Psoas muscle (tissue), 8 donors: ENCODE measurements at regions of chr6 and their contacts with region 1.

Region 1: GRCh38 chr6:17780061-17780460 is 73.3 kb upstream of the NUP153 start:
- DNase-seq: no peak
- ATAC-seq: no peak
- H3K4me3 ChIP-seq: no peak overlapping the region
- H3K27ac ChIP-seq: no peak overlapping the region
- H3K4me1 ChIP-seq: no peaks in the 10 kb centered on the region
- H3K27me3 ChIP-seq: no peaks in the 10 kb centered on the region
- CTCF ChIP-seq: no peak

Region 2: GRCh38 chr6:17633465-17634188 is 146.4 kb before region 1 on chr6:
- intact Hi-C with region 1: loop called in 1 of 2 experiments (anchors 10 kb)
- DNase-seq: no peak
- ATAC-seq: peak in 1 of 4 donors; percentile 25
- H3K4me3 ChIP-seq: no peak overlapping the region
- H3K27ac ChIP-seq: no peak overlapping the region
- H3K4me1 ChIP-seq: peaks cover 8% of the 10 kb centered on the region
- H3K27me3 ChIP-seq: no peaks in the 10 kb centered on the region
- CTCF ChIP-seq: no peak